ENCODE measurements at regions of chr3 and their contacts with region 1.

Region 1: GRCh38 chr3:122768042-122768372 is 25.6 kb downstream of the HSPBAP1 start:
- DNase-seq: no peak
- CTCF ChIP-seq: no peak

Region 2: DNA sequence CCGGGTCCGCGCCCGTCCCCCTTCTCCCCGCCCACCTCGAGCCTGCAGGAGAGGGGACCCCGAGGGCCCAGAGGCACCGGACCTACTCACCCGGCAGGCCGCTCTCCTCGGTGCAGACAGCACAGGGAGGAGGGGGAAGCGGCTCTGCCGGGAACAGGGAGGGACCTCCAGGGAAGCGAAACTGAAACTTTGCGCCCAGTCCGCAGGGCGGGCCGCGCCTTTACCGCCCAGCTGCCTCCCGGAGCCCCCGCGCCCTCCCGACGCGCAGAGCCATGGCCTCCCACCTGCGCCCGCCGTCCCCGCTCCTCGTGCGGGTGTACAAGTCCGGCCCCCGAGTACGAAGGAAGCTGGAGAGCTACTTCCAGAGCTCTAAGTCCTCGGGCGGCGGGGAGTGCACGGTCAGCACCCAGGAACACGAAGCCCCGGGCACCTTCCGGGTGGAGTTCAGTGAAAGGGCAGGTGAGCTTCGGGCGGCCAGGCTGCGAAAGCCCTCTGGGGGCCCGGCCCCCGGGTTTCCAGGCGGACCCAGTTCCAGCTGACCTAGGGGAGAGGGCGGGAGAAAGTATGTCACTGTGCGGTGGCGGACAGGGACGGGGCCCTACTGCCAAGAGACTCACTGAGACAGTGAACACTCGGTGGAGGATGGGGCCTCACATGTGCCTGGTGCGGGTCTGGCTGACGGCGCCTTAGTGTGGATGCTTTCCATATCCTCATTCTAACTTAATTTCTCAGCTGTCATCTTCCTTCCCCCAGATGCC is 203.7 kb before region 1 on chr3 and contains the starts of genes DTX3L and PARP9:
- CTCF ChIA-PET with region 1: no interaction called
- POLR2A ChIA-PET with region 1: no interaction called
- DNase-seq: peak; percentile 80
- CTCF ChIP-seq: no peak

Region 3: DNA sequence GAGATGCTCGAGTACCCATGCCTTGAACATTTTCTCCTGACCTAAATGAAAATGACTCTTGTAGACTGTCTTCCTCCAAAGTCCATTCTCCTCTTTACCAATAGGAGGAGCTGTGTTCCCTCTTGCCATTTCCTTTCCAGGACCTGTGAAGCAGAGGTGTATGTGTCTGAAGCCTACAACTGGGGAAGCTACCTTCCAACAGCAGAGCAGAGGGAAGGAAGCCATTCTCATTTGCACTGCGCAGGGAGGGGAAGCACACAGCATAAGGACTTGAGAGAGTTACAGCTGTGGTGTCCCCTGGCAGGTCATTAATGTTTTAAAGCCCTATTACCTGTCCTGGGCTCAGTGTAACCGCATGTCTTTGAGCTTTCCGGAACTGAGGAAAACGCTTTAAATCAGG is 13.1 kb before region 1 on chr3:
- CTCF ChIA-PET with region 1: interaction called, 24 read pairs
- POLR2A ChIA-PET with region 1: no interaction called
- DNase-seq: peak; percentile 58
- CTCF ChIP-seq: peak; percentile 65

Region 4: GRCh38 chr3:122916580-122916979 is 148.6 kb after region 1 on chr3:
- CTCF ChIA-PET with region 1: no interaction called
- POLR2A ChIA-PET with region 1: no interaction called
- DNase-seq: peak; percentile 67
- CTCF ChIP-seq: no peak